Activated T-helper 2 cell treated with anti-CD3 and anti-CD28 coated beads, Interferon-gamma antibody, Interleukin-2, Interleukin-4, amounts not matched to agents 10 μg/mL and 5 μg/mL and 100 μg/mL, durations not matched to agents 14 hours and 24 hours and 36 hours (primary cell): ENCODE measurements at regions of chr6 and their contacts with region 1.

Region 1: DNA sequence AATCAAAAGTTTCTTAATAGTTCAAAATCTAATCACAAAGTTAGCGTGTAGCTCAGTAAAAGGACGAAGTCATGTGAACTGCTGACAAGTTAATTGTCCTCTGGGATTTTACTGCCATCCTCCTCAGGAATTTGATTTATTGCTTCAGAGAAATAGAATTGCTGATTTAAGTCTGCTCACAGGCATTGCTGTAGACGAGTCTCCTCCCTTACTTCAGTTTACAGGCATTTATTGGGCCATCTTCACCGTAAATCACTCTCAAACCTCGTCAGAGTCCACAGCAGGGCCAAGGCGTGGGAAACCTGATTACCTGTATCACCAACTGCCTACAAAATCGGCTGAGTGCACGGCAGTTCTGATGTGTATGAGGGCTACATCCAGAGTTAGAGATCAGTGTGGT is 119.1 kb upstream of the PDE10A start:
- DNase-seq: no peak
- H3K4me3 Mint-ChIP-seq: no peak overlapping the region
- H3K27ac Mint-ChIP-seq: no peak overlapping the region
- H3K4me1 Mint-ChIP-seq: peaks cover 8% of the 10 kb centered on the region
- H3K27me3 Mint-ChIP-seq: peaks cover 7% of the 10 kb centered on the region

Region 2: DNA sequence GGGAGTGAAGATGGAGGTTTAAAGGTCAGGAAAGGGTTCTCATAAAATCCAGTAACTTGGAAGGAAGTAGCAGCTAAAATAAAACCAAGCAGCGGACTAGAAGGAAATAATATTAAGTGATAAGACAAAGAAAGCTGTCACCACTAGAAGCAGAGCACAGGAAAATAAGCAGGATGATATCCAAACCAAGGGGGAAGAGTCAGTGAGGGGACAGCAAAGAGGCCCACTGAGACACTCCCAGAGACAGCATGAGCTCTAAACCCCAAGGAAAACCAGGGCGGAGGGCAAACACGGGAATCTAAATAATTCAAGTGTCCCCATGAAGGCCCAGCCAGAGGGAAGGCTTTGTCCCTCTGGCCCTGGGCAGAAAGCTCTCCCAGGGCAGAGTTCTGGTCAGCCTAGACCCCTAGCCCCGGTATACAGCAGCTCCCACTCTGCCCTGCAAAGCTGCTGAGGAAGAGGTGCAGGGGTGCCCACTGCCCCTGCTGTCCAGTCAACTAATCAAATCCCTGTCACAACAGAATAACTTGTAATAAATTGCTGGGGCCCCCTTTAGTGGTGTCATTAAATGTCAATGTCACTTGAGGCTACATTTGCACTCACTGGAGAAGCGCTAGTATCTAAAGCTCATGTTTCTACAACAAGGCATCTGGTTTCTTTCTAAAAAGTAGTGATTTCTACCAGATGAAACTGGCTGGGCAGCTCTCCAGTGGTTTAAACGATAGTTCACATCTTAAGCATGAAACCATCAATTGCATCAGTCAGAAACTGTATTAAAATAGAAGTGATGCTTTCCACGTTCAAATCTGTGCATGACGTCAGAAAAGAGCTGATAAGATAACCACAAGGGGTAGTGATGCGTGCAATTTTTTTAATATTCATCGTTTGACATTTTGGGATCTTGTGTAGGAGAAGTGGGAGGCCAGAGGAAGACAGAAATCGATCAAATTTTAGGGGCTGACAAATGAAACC is 132.7 kb before region 1 on chr6:
- intact Hi-C with region 1: no loop called
- DNase-seq: no peak
- H3K4me3 Mint-ChIP-seq: no peak overlapping the region
- H3K27ac Mint-ChIP-seq: no peak overlapping the region
- H3K4me1 Mint-ChIP-seq: no peaks in the 10 kb centered on the region
- H3K27me3 Mint-ChIP-seq: no peaks in the 10 kb centered on the region

Region 3: GRCh38 chr6:165819394-165819793 is 37.3 kb after region 1 on chr6:
- intact Hi-C with region 1: no loop called
- DNase-seq: no peak
- H3K4me3 Mint-ChIP-seq: no peak overlapping the region
- H3K27ac Mint-ChIP-seq: no peak overlapping the region
- H3K4me1 Mint-ChIP-seq: no peaks in the 10 kb centered on the region
- H3K27me3 Mint-ChIP-seq: peaks cover 31% of the 10 kb centered on the region

Region 4: GRCh38 chr6:165850434-165851019 is 68.4 kb after region 1 on chr6:
- intact Hi-C with region 1: loop called (anchors 2 kb)
- DNase-seq: peak; percentile 37
- H3K4me3 Mint-ChIP-seq: no peak overlapping the region
- H3K27ac Mint-ChIP-seq: no peak overlapping the region
- H3K4me1 Mint-ChIP-seq: peaks cover 18% of the 10 kb centered on the region
- H3K27me3 Mint-ChIP-seq: peaks cover 38% of the 10 kb centered on the region